Activated CD4-positive, alpha-beta T cell treated with anti-CD3 and anti-CD28 coated beads, Interleukin-2, amount 10 ng/mL, durations not matched to agents 24 days and 14 days (primary cell): ENCODE measurements at regions of chr12 and their contacts with region 1.

Region 1: DNA sequence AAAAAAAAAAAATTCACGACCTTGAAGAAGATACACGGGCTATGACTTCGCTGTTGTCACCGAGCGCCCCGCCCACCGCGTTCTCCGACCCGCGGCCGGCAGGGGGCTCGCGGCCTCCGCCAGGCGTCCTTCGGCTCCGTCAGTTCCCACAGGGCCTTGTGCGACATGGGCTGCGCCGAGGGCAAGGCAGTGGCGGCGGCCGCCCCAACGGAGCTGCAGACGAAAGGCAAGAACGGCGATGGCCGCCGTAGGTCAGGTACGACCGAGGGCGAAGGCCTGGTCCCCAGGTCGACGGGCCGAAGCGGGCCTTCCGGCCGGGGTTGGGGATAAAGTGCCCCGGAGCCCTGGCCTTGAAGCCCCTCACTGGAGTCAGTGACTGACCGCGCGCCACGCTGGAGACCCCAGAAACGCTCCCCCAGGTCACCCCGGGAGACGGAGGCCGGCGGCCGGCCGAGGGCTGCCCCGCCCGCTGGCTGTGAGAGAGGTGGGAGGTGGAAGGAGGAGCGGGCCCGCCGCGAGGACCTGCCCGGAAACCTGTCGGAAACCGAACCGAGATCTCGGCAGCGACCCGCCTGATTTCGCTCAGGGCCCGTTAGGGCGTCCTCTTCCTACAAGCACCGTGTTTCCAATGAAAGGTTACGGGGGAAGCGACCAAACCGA is at the start of gene TXNRD1:
- DNase-seq: peak; percentile 95
- H3K4me3 Mint-ChIP-seq: peak within 1 kb of the TSS; percentile 79
- H3K27ac Mint-ChIP-seq: peak within 1 kb of the TSS; percentile 76
- H3K4me1 Mint-ChIP-seq: peaks cover 28% of the 10 kb centered on the region
- H3K27me3 Mint-ChIP-seq: peaks cover 3% of the 10 kb centered on the region
- total RNA-seq, gene TXNRD1: 99.6 and 99.7 TPM in 2 replicates

Region 2: DNA sequence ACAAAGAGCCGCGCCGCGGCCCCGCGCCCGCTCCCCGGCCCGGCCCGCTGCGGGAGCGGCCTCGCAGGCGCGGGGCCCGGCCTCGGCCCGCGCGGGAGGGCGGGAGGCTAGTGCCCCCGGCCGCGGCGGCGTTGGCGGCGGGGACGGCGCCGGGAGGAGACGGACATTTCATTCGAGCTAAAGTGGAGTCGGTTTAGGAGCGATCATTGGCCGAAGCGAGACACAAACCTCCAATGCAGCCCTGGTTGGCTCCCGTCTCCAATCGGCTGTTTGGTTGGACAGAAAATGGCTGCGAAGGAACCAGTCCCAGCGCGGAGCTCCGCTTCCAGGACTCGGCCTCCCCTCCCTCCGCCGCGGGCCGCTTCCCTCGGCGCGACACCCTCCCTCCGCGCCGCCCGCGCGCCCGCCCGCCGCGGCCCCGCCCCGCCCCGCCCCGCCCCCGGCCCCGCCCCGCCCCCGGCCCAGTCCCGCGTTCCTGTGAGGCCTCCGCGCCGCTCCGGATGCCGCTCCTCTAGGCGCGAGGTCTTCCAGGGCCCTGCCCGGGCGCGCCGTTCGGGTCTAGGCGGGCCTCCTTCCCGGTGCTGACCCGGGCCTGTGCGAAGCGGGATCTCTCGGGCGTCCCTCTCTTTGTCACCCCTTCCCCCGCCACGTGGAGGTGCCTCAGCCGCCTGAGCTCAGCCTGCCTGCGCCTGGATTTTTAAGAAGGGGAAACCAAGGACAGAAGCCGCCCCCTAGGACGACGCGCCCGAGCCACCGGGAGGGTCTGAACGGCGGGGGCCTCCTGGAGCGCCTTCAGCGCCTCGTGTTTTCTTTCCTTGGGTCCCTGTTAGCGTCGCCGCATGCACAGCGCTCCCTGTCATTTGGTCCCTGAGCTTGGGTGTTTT is 77.6 kb before region 1 on chr12 and contains the start of gene NFYB:
- intact Hi-C with region 1: loop called (anchors 5 kb)
- DNase-seq: peak; percentile 98
- H3K4me3 Mint-ChIP-seq: peak within 1 kb of the TSS; percentile 87
- H3K27ac Mint-ChIP-seq: peak within 1 kb of the TSS; percentile 91
- H3K4me1 Mint-ChIP-seq: peaks cover 16% of the 10 kb centered on the region
- H3K27me3 Mint-ChIP-seq: peaks cover 17% of the 10 kb centered on the region
- total RNA-seq, gene NFYB: 25.4 and 28.6 TPM in 2 replicates

Region 3: GRCh38 chr12:104303538-104304151 is 87.9 kb after region 1 on chr12 and contains the start of gene EID3:
- intact Hi-C with region 1: loop called (anchors 2 kb)
- DNase-seq: peak; percentile 98
- H3K4me3 Mint-ChIP-seq: peak within 1 kb of the TSS; percentile 94
- H3K27ac Mint-ChIP-seq: peak within 1 kb of the TSS; percentile 98
- H3K4me1 Mint-ChIP-seq: peaks cover 57% of the 10 kb centered on the region
- H3K27me3 Mint-ChIP-seq: no peaks in the 10 kb centered on the region
- total RNA-seq, gene EID3: 9.0 and 9.7 TPM in 2 replicates

Region 4: GRCh38 chr12:104358347-104359003 is 142.7 kb after region 1 on chr12:
- intact Hi-C with region 1: loop called (anchors 1 kb)
- DNase-seq: peak; percentile 92
- H3K4me3 Mint-ChIP-seq: no peak overlapping the region
- H3K27ac Mint-ChIP-seq: no peak overlapping the region
- H3K4me1 Mint-ChIP-seq: peaks cover 10% of the 10 kb centered on the region
- H3K27me3 Mint-ChIP-seq: no peaks in the 10 kb centered on the region